Body of pancreas (tissue), 4 donors: ENCODE measurements at regions of chr15 and their contacts with region 1.

Region 1: DNA sequence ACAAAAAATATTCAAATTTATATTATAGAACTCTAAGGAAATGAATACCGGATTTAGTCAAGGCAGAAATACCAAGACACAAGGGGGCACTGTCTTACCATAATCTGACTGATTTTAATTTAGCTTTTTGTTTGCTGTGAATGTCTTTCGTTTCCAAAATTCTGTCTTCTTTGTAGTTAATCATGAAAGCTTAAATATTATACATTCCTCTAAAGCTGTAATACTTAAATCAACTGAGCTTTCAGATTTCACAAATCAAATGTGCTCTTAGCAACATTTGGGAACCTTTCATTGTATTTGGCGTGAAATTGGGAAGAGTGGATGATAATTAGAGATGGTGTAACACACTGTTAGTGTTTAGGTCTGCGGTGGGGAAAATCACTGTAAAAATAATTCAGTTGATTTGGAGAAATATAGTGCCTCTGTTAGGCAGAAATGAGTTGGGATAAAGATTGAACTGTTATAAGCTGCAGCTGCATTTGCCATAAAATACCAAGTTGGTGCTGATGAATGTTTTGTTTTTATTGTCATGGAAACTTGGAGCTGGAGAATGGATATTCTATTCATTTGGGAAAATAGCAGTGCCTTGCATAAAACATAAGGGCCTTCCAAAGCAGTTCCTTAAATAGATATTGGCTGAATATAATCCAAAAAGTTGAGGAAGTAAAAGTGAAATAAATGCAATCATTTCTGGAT is 228.2 kb downstream of the TCF12 start:
- DNase-seq: peak in 1 of 4 donors; percentile 26
- ATAC-seq: no peak
- H3K4me3 ChIP-seq: no peak overlapping the region
- H3K27ac ChIP-seq: no peak overlapping the region
- H3K4me1 ChIP-seq: peaks cover 5% of the 10 kb centered on the region
- H3K27me3 ChIP-seq: no peaks in the 10 kb centered on the region
- CTCF ChIP-seq: peak; percentile 50 to 78 (median 67)
- POLR2A ChIP-seq: no peak

Region 2: GRCh38 chr15:57273402-57273801 is 126.7 kb after region 1 on chr15:
- intact Hi-C with region 1: no loop called
- DNase-seq: no peak
- ATAC-seq: no peak
- H3K4me3 ChIP-seq: no peak overlapping the region
- H3K27ac ChIP-seq: no peak overlapping the region
- H3K4me1 ChIP-seq: no peaks in the 10 kb centered on the region
- H3K27me3 ChIP-seq: no peaks in the 10 kb centered on the region
- CTCF ChIP-seq: no peak
- POLR2A ChIP-seq: no peak

Region 3: GRCh38 chr15:57312318-57313133 is 165.9 kb after region 1 on chr15:
- intact Hi-C with region 1: loop called (anchors 10 kb)
- DNase-seq: no peak
- ATAC-seq: no peak
- H3K4me3 ChIP-seq: no peak overlapping the region
- H3K27ac ChIP-seq: no peak overlapping the region
- H3K4me1 ChIP-seq: no peaks in the 10 kb centered on the region
- H3K27me3 ChIP-seq: no peaks in the 10 kb centered on the region
- CTCF ChIP-seq: no peak
- POLR2A ChIP-seq: no peak

Region 4: GRCh38 chr15:57327985-57328471 is 181.4 kb after region 1 on chr15:
- intact Hi-C with region 1: no loop called
- DNase-seq: peak in 1 of 4 donors; percentile 37
- ATAC-seq: peak; percentile 34
- H3K4me3 ChIP-seq: no peak overlapping the region
- H3K27ac ChIP-seq: no peak overlapping the region
- H3K4me1 ChIP-seq: peaks cover 9% of the 10 kb centered on the region
- H3K27me3 ChIP-seq: no peaks in the 10 kb centered on the region
- CTCF ChIP-seq: no peak
- POLR2A ChIP-seq: no peak